ENCODE measurements at regions of chr15 and their contacts with region 1.

Region 1: DNA sequence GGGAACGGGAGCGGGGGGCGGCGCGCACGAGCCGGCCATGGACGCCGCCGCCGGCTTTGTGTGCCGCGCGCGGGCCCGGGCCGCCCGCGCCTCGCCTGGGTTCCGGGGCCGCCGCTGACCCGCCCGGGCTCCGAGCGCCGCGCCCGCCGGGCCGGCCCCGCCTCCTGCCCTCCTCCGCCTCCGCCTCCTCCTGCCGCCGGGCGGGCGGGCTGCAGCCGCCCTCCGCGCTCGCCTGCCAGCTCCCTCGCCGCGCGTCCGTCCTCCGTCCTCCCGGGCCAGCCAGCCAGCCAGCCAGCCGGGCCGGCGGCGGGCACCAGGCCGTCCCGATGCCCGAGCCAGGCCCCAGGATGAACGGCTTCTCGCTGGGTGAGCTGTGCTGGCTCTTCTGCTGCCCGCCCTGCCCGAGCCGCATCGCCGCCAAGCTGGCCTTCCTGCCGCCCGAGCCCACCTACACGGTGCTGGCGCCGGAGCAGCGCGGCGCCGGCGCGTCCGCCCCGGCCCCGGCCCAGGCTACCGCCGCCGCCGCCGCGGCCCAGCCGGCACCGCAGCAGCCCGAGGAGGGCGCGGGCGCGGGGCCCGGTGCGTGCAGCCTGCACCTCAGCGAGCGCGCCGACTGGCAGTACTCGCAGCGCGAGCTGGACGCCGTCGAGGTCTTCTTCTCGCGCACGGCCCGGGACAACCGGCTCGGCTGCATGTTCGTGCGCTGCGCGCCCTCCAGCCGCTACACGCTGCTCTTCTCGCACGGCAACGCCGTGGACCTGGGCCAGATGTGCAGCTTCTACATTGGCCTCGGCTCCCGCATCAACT is at the start of gene ABHD17C:
- DNase-seq: no peak
- ATAC-seq: peak; percentile 80
- H3K4me3 ChIP-seq: peak within 1 kb of the TSS; percentile 79 to 81
- H3K27ac ChIP-seq: peak within 1 kb of the TSS; percentile 81
- H3K4me1 ChIP-seq: peaks cover 5 to 20% of the 10 kb centered on the region in 2 experiments; a peak in 3 of 4 replicates
- H3K27me3 ChIP-seq: no peaks in the 10 kb centered on the region
- CTCF ChIP-seq: no peak
- POLR2A ChIP-seq: no peak
- RAD21 ChIP-seq: no peak
- total RNA-seq, gene ABHD17C: 27.9 TPM

Region 2: DNA sequence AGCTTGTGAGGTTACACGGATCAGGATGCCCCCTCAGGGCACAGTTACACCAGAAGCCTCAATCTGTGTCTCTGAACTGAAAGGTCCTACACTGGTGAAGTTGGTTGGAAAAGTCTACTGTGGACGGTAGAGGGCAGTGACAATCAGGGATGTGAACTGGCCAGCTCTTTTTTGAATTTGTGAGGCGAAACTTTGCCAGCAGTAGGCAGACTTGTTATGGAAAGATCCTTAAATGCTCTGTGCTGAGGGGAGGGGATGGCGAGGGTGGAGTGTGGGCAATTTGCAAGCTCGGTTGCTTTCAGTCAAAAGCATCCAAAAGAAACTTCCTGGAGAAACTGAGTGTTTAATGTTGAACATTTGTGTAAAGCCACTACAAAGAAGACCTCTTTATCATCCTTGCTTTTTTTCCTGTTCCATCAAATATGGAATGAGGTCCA is 127.6 kb before region 1 on chr15:
- CTCF ChIA-PET with region 1: interaction called, 3 read pairs
- POLR2A ChIA-PET with region 1: no interaction called
- RAD21 ChIA-PET with region 1: no interaction called
- intact Hi-C with region 1: loop called (anchors 1 kb)
- DNase-seq: peak; percentile 72
- ATAC-seq: peak; percentile 97
- H3K4me3 ChIP-seq: no peak overlapping the region
- H3K27ac ChIP-seq: no peak overlapping the region
- H3K4me1 ChIP-seq: no peaks in the 10 kb centered on the region
- H3K27me3 ChIP-seq: no peaks in the 10 kb centered on the region
- CTCF ChIP-seq: peak; percentile 75 to 99 (median 88)
- POLR2A ChIP-seq: no peak
- RAD21 ChIP-seq: peak; percentile 96

Region 3: DNA sequence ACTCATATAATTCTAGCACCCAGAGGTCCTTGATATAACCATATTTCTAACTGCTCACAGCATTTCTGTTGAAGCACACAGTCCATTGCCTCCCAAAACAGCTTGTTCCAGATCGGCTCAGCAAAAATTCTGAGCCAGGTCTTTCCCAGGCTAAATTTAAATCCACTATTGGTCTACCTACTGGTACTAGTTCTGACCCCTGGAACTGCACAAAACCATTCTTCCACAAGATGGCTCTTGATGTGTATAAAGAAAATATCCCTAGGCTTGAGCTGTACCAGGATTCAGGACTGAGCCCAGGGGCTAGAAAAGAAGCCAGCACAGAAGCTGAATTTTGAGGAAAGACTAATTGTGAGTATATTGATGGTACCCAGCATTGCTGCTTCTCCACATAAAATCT is 75.6 kb before region 1 on chr15:
- CTCF ChIA-PET with region 1: no interaction called
- POLR2A ChIA-PET with region 1: no interaction called
- RAD21 ChIA-PET with region 1: no interaction called
- intact Hi-C with region 1: no loop called
- DNase-seq: no peak
- ATAC-seq: peak; percentile 73
- H3K4me3 ChIP-seq: no peak overlapping the region
- H3K27ac ChIP-seq: no peak overlapping the region
- H3K4me1 ChIP-seq: peaks cover 0 to 7% of the 10 kb centered on the region in 2 experiments; a peak in 1 of 4 replicates
- H3K27me3 ChIP-seq: no peaks in the 10 kb centered on the region
- CTCF ChIP-seq: peak in 2 of 3 experiments; percentile 10 to 24; a peak in 2 of 6 replicates
- POLR2A ChIP-seq: no peak
- RAD21 ChIP-seq: peak; percentile 47

Region 4: GRCh38 chr15:81492331-81492963 is 797.1 kb after region 1 on chr15:
- CTCF ChIA-PET with region 1: no interaction called
- POLR2A ChIA-PET with region 1: no interaction called
- RAD21 ChIA-PET with region 1: no interaction called
- intact Hi-C with region 1: no loop called
- DNase-seq: no peak
- ATAC-seq: no peak
- H3K4me3 ChIP-seq: no peak overlapping the region
- H3K27ac ChIP-seq: no peak overlapping the region
- H3K4me1 ChIP-seq: no peaks in the 10 kb centered on the region
- H3K27me3 ChIP-seq: peaks cover 58% of the 10 kb centered on the region
- CTCF ChIP-seq: no peak
- POLR2A ChIP-seq: no peak
- RAD21 ChIP-seq: no peak

Measured in HCT116 (cell line).